ENCODE measurements at regions of chr13 and their contacts with region 1.

Region 1: GRCh38 chr13:42354241-42355091 is 82.5 kb downstream of the AKAP11 start:
- DNase-seq: no peak
- H3K4me3 Mint-ChIP-seq: peak overlapping the region; percentile 72
- H3K27ac Mint-ChIP-seq: peak overlapping the region; percentile 99
- H3K4me1 Mint-ChIP-seq: peaks cover 68% of the 10 kb centered on the region
- H3K27me3 Mint-ChIP-seq: peaks cover 1% of the 10 kb centered on the region

Region 2: DNA sequence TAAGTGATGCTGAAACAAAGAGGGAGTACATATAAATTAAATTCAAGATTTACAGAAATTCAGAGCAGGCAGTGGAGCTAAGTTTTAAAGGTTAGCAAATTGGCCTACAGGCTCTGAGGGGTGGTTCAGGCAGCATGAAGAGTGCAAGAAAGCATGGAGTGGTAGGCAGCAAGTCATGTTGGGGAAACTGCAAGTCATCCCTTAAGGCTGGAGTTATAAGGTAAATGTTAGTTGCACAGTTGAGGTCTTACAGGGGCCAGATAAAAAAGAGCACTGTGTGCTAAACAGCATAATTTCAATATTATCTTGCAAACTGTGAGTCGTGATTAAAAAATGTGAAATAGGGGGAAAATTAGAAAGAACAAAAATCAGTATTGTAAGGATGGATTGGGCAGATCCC is 499.7 kb before region 1 on chr13:
- intact Hi-C with region 1: no loop called
- DNase-seq: no peak
- H3K4me3 Mint-ChIP-seq: no peak overlapping the region
- H3K27ac Mint-ChIP-seq: no peak overlapping the region
- H3K4me1 Mint-ChIP-seq: no peaks in the 10 kb centered on the region
- H3K27me3 Mint-ChIP-seq: no peaks in the 10 kb centered on the region

Region 3: GRCh38 chr13:42369071-42369797 is 14.8 kb after region 1 on chr13:
- intact Hi-C with region 1: loop called (anchors 1 kb)
- DNase-seq: no peak
- H3K4me3 Mint-ChIP-seq: no peak overlapping the region
- H3K27ac Mint-ChIP-seq: peak overlapping the region; percentile 54
- H3K4me1 Mint-ChIP-seq: peaks cover 66% of the 10 kb centered on the region
- H3K27me3 Mint-ChIP-seq: no peaks in the 10 kb centered on the region

Region 4: GRCh38 chr13:42420304-42420703 is 65.8 kb after region 1 on chr13:
- intact Hi-C with region 1: loop called (anchors 1 kb)
- DNase-seq: no peak
- H3K4me3 Mint-ChIP-seq: peak overlapping the region; percentile 54
- H3K27ac Mint-ChIP-seq: peak overlapping the region; percentile 83
- H3K4me1 Mint-ChIP-seq: peaks cover 43% of the 10 kb centered on the region
- H3K27me3 Mint-ChIP-seq: peaks cover 2% of the 10 kb centered on the region

Measured in activated T-helper 1 cell treated with anti-CD3 and anti-CD28 coated beads, Interleukin-12 subunit alpha, Interleukin-12 subunit beta, Interleukin-2, Interleukin-4 antibody, amounts not matched to agents 30 ng/mL and 10 ng/mL and 1 ng/mL, durations not matched to agents 14 hours and 24 hours and 36 hours (primary cell).